Activated CD8-positive, alpha-beta T cell treated with anti-CD3 and anti-CD28 coated beads, Interleukin-2, amount 10 ng/mL, durations not matched to agents 7 days and 5 days (primary cell): ENCODE measurements at regions of chr3 and their contacts with region 1.

Region 1: DNA sequence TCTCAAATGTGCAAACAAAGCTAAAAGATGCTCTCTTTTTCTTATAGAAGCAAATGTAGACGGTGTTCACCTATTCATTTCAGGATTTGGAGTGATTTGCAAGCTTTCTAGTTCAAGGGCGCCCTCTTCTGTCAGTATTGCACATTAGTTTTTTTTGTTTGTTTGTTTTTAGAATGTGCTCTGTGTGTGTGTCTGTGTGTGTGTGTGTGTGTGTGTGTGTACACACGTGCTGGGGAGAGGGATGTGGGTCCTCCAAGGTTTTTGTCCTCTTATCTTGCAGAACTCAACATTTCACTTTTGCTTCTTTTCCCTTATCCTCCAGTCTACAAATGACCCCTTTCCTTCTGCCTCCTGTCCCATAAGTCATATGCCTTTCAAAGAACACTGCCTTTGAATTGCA is 23.5 kb downstream of the DNAH1 start:
- DNase-seq: peak; percentile 70
- ATAC-seq: peak; percentile 71
- H3K4me3 Mint-ChIP-seq: no peak overlapping the region
- H3K27ac Mint-ChIP-seq: no peak overlapping the region
- H3K4me1 Mint-ChIP-seq: peaks cover 5% of the 10 kb centered on the region
- H3K27me3 Mint-ChIP-seq: no peaks in the 10 kb centered on the region

Region 2: GRCh38 chr3:52001443-52001974 is 338.1 kb before region 1 on chr3:
- CTCF ChIA-PET with region 1: interaction called, 14 read pairs
- POLR2A ChIA-PET with region 1: no interaction called
- DNase-seq: peak; percentile 92
- ATAC-seq: peak; percentile 98
- H3K4me3 Mint-ChIP-seq: no peak overlapping the region
- H3K27ac Mint-ChIP-seq: no peak overlapping the region
- H3K4me1 Mint-ChIP-seq: peaks cover 24% of the 10 kb centered on the region
- H3K27me3 Mint-ChIP-seq: peaks cover 10% of the 10 kb centered on the region

Region 3: DNA sequence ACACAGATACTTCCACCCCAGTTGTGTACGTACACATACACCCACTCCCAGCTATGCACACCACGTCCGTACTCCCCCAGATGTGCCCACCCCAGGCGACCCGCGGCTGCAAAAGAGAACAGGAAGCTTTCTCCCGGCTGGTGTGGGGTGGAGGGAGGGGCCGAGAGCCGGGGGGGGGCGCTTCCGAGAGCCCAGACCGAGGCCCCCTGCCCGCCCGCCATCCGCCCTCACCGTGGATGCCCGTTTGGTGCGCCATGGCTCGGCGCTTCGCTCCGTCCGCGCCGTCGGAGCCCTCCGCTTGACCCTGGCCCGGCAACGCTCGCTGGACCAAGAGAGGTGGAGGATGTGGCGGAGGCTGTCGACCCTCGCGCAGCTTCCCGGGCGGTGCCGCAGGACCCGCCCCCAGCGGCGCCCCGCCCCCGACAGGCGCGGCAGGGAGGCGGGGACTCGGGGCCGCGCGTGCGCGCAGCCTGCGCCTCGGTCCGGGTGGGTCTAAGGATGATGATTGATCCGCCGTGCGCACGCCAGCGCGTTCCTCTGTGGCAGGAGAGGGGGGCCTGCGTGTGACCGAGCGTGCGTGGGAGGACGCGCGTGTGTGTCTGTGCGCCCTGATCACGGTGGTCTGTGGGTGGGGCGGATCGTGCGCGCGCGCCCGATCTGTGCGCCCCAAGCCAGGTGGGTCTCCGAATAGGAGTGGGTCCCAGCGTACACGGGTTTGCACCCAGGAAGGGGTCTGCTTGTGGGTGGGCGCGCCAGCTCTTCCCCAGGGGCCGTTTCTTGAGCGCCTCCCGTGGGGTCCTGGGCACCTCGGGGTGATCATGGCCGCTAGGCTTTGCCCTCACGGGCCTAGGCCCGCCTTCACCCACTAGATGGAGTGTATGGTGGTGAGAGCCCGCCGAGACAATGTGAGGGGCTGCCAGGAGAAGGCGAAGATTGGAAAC is 100.6 kb before region 1 on chr3 and contains the start of gene TWF2:
- CTCF ChIA-PET with region 1: interaction called, 38 read pairs
- POLR2A ChIA-PET with region 1: interaction called, 3 read pairs
- DNase-seq: peak; percentile 85
- ATAC-seq: peak; percentile 83
- H3K4me3 Mint-ChIP-seq: peak within 1 kb of the TSS; percentile 96
- H3K27ac Mint-ChIP-seq: peak within 1 kb of the TSS; percentile 96
- H3K4me1 Mint-ChIP-seq: peaks cover 73% of the 10 kb centered on the region
- H3K27me3 Mint-ChIP-seq: no peaks in the 10 kb centered on the region
- total RNA-seq, gene TWF2: 154 to 162 TPM

Region 4: DNA sequence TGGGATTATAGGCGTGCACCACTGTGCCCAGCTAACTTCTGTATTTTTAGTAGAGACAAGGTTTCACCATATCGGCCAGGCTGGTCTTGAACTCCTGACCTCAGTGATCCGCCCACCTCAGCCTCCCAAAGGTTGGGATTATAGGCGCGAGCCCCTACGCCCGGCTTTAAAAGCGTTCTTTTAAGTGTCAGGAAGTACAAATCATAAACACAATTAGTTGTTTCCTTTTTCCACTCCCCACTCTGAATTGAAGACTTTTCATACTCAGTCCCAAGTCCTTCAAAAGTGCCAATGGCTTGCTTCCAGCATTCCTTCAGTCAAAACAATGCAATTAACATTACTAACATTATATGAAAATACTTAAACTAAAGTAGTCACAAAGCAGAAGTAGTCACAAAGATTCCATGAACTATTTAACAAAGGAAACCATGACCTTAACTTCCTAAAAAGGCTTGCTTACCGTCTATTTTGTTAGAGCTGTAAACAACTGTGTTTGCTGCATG is 69.3 kb before region 1 on chr3:
- CTCF ChIA-PET with region 1: interaction called, 12 read pairs
- POLR2A ChIA-PET with region 1: no interaction called
- DNase-seq: no peak
- ATAC-seq: no peak
- H3K4me3 Mint-ChIP-seq: peak overlapping the region; percentile 84
- H3K27ac Mint-ChIP-seq: peak overlapping the region; percentile 96
- H3K4me1 Mint-ChIP-seq: peaks cover 84% of the 10 kb centered on the region
- H3K27me3 Mint-ChIP-seq: no peaks in the 10 kb centered on the region

Region 5: DNA sequence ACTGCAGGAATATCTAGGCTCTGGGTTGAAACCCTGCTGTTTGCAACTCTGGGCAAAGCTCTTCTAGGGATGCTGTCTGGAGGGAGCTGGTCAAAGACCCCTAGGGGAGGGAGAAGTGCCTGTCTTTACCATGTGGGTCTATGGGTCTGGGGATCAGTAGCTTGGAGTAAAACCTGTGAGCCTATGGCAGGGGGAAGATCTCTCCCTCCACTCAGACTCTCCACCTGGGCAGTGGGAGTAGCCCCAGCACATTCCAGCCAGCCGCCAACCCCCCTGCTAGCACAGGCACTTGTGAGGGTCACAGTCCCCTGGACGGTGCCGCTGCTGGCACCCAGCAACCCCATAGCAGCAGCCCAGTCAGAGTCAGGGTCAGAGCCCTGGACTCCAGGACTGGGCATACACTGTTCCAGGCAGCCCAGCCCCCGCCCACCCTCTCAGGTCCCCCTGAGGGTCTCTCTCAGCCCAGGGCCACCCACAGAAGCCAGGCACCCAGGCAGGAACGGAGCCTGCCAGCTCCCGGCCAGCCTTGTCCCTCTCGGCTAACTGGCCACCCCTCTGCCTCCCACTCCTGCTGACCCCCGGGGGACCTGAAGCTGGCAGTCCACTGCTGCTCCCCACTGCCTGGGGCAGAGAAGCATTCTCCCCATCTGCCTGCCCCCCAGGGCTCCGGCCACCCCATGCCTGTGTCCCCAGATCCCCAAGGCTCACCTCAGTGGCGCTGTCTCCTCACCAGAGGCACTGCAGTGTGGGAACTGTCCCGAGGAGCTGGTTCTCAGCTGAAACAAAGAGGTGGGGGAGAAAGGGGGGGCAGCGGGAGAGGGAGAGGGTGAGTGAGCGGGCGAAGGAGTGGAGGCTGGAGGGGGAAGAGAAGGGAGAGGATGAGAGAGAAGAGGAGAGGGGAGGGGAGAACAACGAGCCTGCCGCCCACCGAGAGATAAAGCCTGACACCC is 41.2 kb before region 1 on chr3:
- CTCF ChIA-PET with region 1: interaction called, 102 read pairs
- POLR2A ChIA-PET with region 1: interaction called, 5 read pairs
- DNase-seq: no peak
- ATAC-seq: no peak
- H3K4me3 Mint-ChIP-seq: no peak overlapping the region
- H3K27ac Mint-ChIP-seq: no peak overlapping the region
- H3K4me1 Mint-ChIP-seq: no peaks in the 10 kb centered on the region
- H3K27me3 Mint-ChIP-seq: no peaks in the 10 kb centered on the region

Region 6: DNA sequence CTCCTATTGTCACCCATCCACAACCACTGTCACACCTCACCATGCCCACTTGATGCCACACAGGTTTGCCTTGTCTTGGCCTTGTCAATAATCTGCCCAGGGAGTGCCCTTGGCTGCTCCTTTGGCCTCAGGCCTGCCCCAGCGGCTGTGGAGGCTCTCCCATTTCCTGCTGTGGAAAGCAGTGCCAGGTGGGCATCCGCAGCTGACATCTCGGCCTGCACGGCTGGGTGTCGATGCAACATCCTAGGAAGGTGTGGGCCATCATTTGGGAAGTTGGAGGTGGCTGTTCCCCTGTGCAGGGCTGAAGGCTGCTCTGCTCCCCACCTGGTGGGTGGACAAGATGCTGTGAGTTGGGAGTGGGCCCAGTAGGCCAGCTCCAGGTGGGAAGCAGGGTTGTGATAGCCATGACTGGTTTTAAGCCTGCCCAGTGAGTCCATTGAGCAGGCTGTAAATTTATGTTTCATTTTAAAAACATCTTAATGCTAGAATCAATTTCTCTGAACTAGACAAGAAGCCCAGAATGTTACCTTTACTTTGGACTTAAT is 11.0 kb before region 1 on chr3:
- CTCF ChIA-PET with region 1: interaction called, 15 read pairs
- POLR2A ChIA-PET with region 1: no interaction called
- DNase-seq: no peak
- ATAC-seq: no peak
- H3K4me3 Mint-ChIP-seq: no peak overlapping the region
- H3K27ac Mint-ChIP-seq: no peak overlapping the region
- H3K4me1 Mint-ChIP-seq: no peaks in the 10 kb centered on the region
- H3K27me3 Mint-ChIP-seq: no peaks in the 10 kb centered on the region

Region 7: GRCh38 chr3:52636673-52637072 is 297.1 kb after region 1 on chr3:
- CTCF ChIA-PET with region 1: no interaction called
- POLR2A ChIA-PET with region 1: no interaction called
- DNase-seq: no peak
- ATAC-seq: no peak
- H3K4me3 Mint-ChIP-seq: no peak overlapping the region
- H3K27ac Mint-ChIP-seq: no peak overlapping the region
- H3K4me1 Mint-ChIP-seq: no peaks in the 10 kb centered on the region
- H3K27me3 Mint-ChIP-seq: no peaks in the 10 kb centered on the region